WTC11 (cell line): ENCODE measurements at regions of chr17 and their contacts with region 1.

Region 1: GRCh38 chr17:27353461-27354050 is 59.6 kb downstream of the WSB1 start:
- DNase-seq: peak; percentile 85
- ATAC-seq: peak; percentile 62
- H3K4me3 Mint-ChIP-seq: peak overlapping the region; percentile 81
- H3K27ac Mint-ChIP-seq: peak overlapping the region; percentile 88
- H3K4me1 Mint-ChIP-seq: peaks cover 20% of the 10 kb centered on the region
- H3K27me3 Mint-ChIP-seq: peaks cover 9% of the 10 kb centered on the region; the same call in 1 of the 2 replicates
- CTCF ChIP-seq: peak; percentile 89

Region 2: DNA sequence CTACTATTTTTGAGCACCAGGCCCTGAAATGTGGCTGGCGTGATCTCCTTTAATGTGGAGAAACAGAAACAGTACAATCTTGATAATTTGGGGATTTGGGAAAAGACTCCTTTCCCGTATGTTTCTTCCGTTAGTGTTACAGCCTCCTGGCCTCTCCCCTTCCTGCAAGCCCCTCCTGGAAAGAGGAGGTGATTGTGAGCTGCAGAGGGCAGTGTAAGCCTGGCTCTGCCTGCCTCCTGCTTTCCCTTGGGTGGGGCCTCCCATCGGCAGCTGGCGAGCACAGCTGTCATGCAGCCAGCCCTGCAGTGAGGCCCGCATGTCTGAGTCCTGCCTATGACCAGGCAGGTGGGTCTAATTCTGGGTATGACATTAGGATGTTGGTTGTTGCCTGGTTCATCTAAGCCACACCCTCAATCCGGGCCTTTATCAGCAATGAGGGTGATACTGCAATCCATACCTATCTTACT is 108.3 kb before region 1 on chr17:
- CTCF ChIA-PET with region 1: interaction called, 18 read pairs
- POLR2A ChIA-PET with region 1: no interaction called
- DNase-seq: peak; percentile 81
- ATAC-seq: peak; percentile 97
- H3K4me3 Mint-ChIP-seq: peak overlapping the region; percentile 2; the same call in 1 of the 2 replicates
- H3K27ac Mint-ChIP-seq: no peak overlapping the region
- H3K4me1 Mint-ChIP-seq: peaks cover 25% of the 10 kb centered on the region
- H3K27me3 Mint-ChIP-seq: peaks cover under 1% of the 10 kb centered on the region; the same call in 1 of the 2 replicates
- CTCF ChIP-seq: no peak

Region 3: DNA sequence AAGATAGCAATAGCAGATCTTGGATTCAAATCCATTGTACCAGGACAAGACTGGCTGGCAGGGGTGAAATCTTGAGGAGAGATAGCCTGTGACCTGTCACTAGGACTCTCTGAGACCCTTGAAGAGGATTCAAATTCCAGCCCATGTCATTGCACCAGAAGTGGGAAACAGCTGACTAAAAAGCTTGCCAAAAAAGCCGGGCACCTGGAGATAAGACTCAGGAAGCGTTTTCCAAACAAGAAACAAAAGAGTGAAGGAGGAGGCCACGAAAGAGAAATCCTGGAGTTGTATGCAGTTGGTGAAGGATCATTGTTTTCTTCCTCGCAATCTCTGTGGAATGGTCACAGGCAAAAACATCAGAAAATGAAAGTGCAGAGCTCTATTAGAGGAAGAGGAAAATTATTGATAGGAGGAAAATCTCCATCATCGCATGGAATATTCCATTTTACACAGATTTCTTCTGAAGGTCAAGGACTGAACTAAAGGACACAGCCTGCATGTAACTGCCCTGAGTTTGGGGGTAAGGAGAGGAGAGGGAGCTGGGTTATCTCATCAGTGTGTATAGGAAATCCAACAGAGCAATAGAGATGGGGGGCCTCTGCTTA is 68.6 kb before region 1 on chr17:
- CTCF ChIA-PET with region 1: interaction called, 11 read pairs
- POLR2A ChIA-PET with region 1: no interaction called
- DNase-seq: no peak
- ATAC-seq: no peak
- H3K4me3 Mint-ChIP-seq: no peak overlapping the region
- H3K27ac Mint-ChIP-seq: peak overlapping the region; percentile 25
- H3K4me1 Mint-ChIP-seq: peaks cover 7% of the 10 kb centered on the region
- H3K27me3 Mint-ChIP-seq: peaks cover 2% of the 10 kb centered on the region; the same call in 1 of the 2 replicates
- CTCF ChIP-seq: no peak

Region 4: DNA sequence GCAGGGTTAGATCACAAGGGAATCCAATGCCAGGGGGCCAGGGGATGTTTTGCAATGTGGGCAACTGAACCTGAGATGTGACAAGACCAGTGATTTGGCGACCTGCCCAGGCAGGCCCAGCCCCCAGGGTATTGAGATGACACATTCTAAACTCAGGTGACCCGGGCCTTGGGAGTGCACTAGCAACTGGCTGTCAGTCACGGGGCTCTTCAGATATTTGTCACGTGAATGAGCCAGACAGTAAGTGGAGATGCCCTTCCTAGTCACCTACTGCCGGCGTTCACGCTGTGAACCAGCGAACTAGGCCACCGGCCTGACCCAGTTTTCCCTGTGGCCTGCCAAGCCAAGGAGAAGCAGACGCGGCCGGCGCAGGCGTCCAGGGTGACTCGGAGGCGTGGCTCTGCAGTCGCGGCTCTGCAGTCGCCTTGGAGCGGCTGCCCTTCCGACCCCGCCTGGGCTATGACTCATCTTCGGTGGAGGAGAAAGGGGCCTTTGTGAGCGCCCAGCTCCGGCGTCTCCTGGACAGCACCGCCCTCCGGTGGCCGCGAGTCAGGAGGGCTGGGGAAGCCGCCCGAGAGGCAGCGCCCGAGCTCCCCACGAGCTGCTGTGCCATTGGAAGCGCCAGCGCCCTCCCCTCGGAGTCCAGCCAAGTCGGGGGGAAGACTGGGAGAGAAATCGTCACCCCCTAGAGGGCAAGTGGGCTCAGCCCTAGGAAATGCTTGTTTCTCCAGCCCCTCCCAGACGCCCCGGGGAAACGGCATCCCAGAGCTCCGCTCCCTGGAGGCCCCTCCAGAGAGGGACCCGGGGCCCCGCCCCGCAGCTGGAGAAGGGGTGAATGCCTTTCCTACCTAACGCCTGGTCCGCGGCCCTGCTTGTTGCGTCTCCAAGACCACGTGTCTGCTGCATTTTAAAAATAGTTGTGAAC is 20.8 kb before region 1 on chr17:
- CTCF ChIA-PET with region 1: interaction called, 14 read pairs
- POLR2A ChIA-PET with region 1: interaction called, 4 read pairs
- DNase-seq: peak; percentile 96
- ATAC-seq: peak; percentile 96
- H3K4me3 Mint-ChIP-seq: peak overlapping the region; percentile 67
- H3K27ac Mint-ChIP-seq: peak overlapping the region; percentile 89
- H3K4me1 Mint-ChIP-seq: peaks cover 50% of the 10 kb centered on the region
- H3K27me3 Mint-ChIP-seq: peaks cover 5% of the 10 kb centered on the region; the same call in 1 of the 2 replicates
- CTCF ChIP-seq: no peak

Region 5: GRCh38 chr17:27367121-27367991 is 13.8 kb after region 1 on chr17:
- CTCF ChIA-PET with region 1: interaction called, 18 read pairs
- POLR2A ChIA-PET with region 1: no interaction called
- DNase-seq: no peak
- ATAC-seq: peak; percentile 77
- H3K4me3 Mint-ChIP-seq: no peak overlapping the region
- H3K27ac Mint-ChIP-seq: no peak overlapping the region; the same call in 1 of the 2 replicates
- H3K4me1 Mint-ChIP-seq: peaks cover 16% of the 10 kb centered on the region
- H3K27me3 Mint-ChIP-seq: no peaks in the 10 kb centered on the region
- CTCF ChIP-seq: no peak

Region 6: DNA sequence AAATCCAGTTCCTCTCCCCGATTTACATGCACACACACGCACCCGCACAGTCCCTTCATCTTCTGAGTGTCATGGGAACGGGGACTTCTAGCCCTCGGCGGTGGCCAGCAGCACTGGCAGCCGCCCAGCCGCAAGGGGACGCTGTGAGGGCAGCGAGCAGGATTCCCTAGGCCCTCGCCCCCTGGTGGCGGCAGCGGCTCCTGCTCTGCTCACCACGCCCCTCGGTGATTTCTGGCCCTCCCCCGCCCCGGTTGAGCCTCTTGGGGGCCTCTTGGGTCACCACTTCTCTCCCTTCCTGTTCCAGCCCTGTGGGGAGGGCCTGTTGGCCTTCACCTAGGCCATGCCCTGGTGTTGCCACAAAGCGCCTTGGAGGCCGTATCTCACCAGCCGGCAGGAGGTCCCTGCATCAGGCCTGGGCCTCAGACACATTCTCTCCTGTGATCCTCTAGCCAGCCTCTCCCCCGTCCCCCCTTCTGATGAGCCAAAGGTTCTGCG is 27.5 kb after region 1 on chr17:
- CTCF ChIA-PET with region 1: interaction called, 11 read pairs
- POLR2A ChIA-PET with region 1: no interaction called
- DNase-seq: peak; percentile 92
- ATAC-seq: peak; percentile 92
- H3K4me3 Mint-ChIP-seq: no peak overlapping the region
- H3K27ac Mint-ChIP-seq: no peak overlapping the region
- H3K4me1 Mint-ChIP-seq: no peaks in the 10 kb centered on the region
- H3K27me3 Mint-ChIP-seq: no peaks in the 10 kb centered on the region
- CTCF ChIP-seq: peak; percentile 100